Aorta (tissue), 5 donors: ENCODE measurements at regions of chr12 and their contacts with region 1.

Region 1: GRCh38 chr12:110583137-110584059 is at the start of gene PPTC7:
- DNase-seq: peak; percentile 98 to 99
- ATAC-seq: peak; percentile 99
- H3K4me3 ChIP-seq: peak within 1 kb of the TSS; percentile 69 to 93
- H3K27ac ChIP-seq: peak within 1 kb of the TSS; percentile 50
- H3K4me1 ChIP-seq: no peaks in the 10 kb centered on the region
- H3K27me3 ChIP-seq: no peaks in the 10 kb centered on the region
- total RNA-seq, gene PPTC7: 17.1 to 21.8 TPM

Region 2: DNA sequence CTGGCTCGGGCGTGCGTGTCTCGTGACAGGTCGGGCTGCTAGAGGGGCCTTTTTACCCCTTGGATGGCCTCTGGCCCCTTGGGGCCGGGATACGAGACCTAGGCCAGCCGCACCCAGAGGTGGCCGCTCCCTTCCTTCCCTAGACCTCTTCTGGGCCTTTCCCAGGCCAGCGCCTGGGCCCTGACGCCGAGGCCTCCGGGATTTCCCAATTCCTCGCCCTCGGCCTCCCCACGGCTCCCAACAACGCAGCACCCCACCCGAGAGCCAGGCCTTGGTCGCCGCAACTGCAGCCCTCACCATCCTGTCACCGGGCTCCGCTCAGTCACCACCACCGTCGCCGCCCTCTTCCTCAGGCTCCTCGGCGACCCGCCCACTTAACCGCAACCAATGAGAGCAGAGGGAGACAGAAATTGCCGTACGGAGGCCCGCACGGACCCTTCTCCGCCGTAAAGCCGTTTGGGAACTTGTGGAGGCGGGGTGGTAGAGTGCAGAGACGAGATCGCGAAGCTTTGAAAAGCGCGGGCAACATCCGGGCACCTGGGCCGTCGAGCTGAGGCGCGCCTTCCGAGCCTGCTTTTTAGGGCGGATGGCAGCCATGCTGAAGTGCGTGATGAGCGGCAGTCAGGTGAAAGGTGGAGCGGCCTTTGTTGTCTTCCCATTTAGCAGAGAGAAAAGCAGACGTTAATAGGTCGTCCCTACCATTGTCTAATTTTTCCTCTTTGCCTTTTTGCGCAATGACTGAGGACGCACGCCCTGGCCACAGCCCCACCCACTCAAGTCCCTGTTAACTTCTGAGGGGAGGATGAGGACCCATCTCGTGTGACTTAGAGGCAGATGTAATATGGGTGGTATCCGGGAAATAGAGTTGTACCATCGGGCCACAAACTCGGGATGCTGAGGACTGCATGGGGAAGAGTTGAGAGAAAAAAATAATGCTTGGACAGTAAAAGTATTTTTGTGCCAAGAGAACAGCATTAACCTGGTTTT is 81.4 kb before region 1 on chr12 and contains the starts of genes RAD9B and VPS29:
- intact Hi-C with region 1: loop called in 1 of 2 experiments (anchors 5 kb)
- DNase-seq: peak; percentile 99
- ATAC-seq: peak; percentile 99
- H3K4me3 ChIP-seq: peak within 1 kb of the TSS; percentile 73 to 85
- H3K27ac ChIP-seq: peak within 1 kb of the TSS; percentile 69 to 87
- H3K4me1 ChIP-seq: peaks cover 0 to 6% of the 10 kb centered on the region in 2 donors
- H3K27me3 ChIP-seq: no peaks in the 10 kb centered on the region
- total RNA-seq, gene RAD9B: 0.57 to 2.2 TPM
- total RNA-seq, gene VPS29: 99.6 to 122 TPM

Region 3: DNA sequence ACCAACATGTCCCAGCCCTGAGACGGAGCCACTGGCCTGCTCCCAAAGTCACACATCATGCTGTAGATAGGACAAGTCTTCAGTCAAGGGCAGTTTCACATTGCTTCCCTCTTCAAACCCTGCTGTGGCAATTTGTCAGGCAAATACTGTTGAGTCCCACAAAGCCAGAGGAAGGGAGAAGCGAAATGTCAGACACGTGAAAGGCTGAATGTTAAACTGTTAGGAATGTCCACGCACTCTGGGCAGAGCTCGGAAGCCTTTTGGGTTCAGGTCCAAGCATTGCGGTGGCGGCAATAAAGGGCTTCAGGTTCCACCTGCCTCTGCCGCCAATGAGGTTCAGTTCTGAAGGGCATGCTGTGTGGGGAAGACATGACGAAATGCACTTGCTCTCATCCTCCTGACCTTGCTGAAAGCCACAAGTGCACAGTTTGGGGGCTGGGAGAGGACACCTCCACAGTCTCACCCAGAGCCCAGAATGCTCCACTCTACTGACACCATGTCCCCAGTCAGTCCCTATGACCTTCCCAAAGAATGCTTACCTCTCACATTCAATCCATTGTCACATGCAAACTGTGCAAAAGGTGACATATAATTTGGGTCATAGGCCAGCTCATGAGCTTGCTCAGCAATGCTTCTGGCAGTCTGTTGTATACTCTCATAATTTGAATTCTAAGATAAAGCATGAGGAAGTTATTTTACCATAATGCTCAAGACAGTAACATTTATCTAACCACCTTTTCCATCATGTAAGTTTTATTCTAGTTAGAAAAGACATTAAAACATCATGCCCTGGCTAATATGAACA is 45.6 kb before region 1 on chr12:
- intact Hi-C with region 1: loop called (anchors 5 kb)
- DNase-seq: peak; percentile 53 to 82
- ATAC-seq: peak; percentile 62
- H3K4me3 ChIP-seq: no peak overlapping the region
- H3K27ac ChIP-seq: peak overlapping the region in 1 of 2 donors; percentile 91
- H3K4me1 ChIP-seq: peaks cover 0 to 1% of the 10 kb centered on the region in 2 donors
- H3K27me3 ChIP-seq: no peaks in the 10 kb centered on the region

Region 4: DNA sequence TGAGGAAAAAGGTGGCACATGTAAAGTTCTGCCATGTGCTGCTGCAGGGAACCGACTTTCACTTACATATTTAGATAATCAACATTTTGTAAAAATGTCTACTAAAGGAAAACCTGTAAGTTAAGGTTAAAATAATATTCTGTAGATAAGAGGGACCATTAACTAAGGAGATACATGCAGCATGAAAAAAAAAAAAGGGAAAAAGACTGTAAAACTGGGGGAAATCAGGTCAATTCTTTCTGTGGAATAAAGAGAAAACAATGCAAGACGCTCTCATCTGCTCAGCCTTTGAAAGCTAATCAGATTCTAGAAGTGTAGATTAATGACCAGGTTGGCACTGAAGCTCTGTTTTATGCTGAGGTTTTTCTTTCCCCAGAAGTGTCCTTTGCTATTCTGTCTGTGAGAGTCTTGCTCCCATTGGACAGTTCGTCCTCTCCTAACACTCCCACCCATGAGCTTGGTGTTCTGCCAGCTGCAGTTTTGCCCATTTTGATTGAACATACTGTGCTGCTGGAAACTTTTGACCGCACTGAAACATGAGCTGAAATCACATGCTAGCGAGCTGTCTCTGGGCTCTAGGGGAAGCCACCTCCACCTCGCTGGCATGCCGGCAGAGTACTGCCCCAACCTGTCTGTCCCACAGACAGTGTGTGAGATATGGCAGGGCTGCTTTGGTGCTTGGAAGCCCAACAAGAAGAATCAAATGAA is 40.0 kb before region 1 on chr12:
- intact Hi-C with region 1: loop called (anchors 5 kb)
- DNase-seq: peak; percentile 86 to 90
- ATAC-seq: peak; percentile 91
- H3K4me3 ChIP-seq: no peak overlapping the region
- H3K27ac ChIP-seq: peak overlapping the region; percentile 71 to 94
- H3K4me1 ChIP-seq: peaks cover 0 to 2% of the 10 kb centered on the region in 2 donors
- H3K27me3 ChIP-seq: no peaks in the 10 kb centered on the region